Endothelial cell of umbilical vein (primary cell): ENCODE measurements at regions of chrX and their contacts with region 1.

Region 1: GRCh38 chrX:119606280-119607015 is at the start of gene NKRF:
- DNase-seq: peak; percentile 92
- H3K4me3 ChIP-seq: peak within 1 kb of the TSS; percentile 16 to 63 (median 54)
- H3K27ac ChIP-seq: peak within 1 kb of the TSS; percentile 63
- H3K4me1 ChIP-seq: peaks cover 2% of the 10 kb centered on the region
- H3K27me3 ChIP-seq: peaks cover 0 to 3% of the 10 kb centered on the region in 2 experiments
- CTCF ChIP-seq: no peak
- POLR2A ChIP-seq: peak; percentile 78
- total RNA-seq, gene NKRF: 10.8 and 12.0 TPM in 2 replicates

Region 2: GRCh38 chrX:119359618-119360382 is 246.6 kb before region 1 on chrX:
- CTCF ChIA-PET with region 1: no interaction called
- POLR2A ChIA-PET with region 1: no interaction called
- dilution Hi-C with region 1: no loop called
- intact Hi-C with region 1: no loop called
- DNase-seq: no peak
- H3K4me3 ChIP-seq: no peak overlapping the region
- H3K27ac ChIP-seq: no peak overlapping the region
- H3K4me1 ChIP-seq: no peaks in the 10 kb centered on the region
- H3K27me3 ChIP-seq: no peaks in the 10 kb centered on the region
- CTCF ChIP-seq: no peak
- POLR2A ChIP-seq: no peak

Region 3: GRCh38 chrX:119729408-119730201 is 123.2 kb after region 1 on chrX:
- CTCF ChIA-PET with region 1: interaction called, 106 read pairs
- POLR2A ChIA-PET with region 1: no interaction called
- dilution Hi-C with region 1: no loop called
- intact Hi-C with region 1: loop called (anchors 1 kb)
- DNase-seq: peak; percentile 59
- H3K4me3 ChIP-seq: no peak overlapping the region
- H3K27ac ChIP-seq: no peak overlapping the region
- H3K4me1 ChIP-seq: no peaks in the 10 kb centered on the region
- H3K27me3 ChIP-seq: no peaks in the 10 kb centered on the region
- CTCF ChIP-seq: peak; percentile 35 to 50
- POLR2A ChIP-seq: no peak

Region 4: GRCh38 chrX:119753571-119754257 is 147.3 kb after region 1 on chrX:
- CTCF ChIA-PET with region 1: interaction called, 11 read pairs
- POLR2A ChIA-PET with region 1: no interaction called
- dilution Hi-C with region 1: no loop called
- intact Hi-C with region 1: no loop called
- DNase-seq: peak; percentile 56
- H3K4me3 ChIP-seq: no peak overlapping the region
- H3K27ac ChIP-seq: no peak overlapping the region
- H3K4me1 ChIP-seq: no peaks in the 10 kb centered on the region
- H3K27me3 ChIP-seq: no peaks in the 10 kb centered on the region
- CTCF ChIP-seq: peak; percentile 21 to 40
- POLR2A ChIP-seq: no peak

Region 5: GRCh38 chrX:119871599-119872395 is 265.3 kb after region 1 on chrX and contains the starts of genes NDUFA1 and RNF113A:
- CTCF ChIA-PET with region 1: no interaction called
- POLR2A ChIA-PET with region 1: no interaction called
- dilution Hi-C with region 1: no loop called
- intact Hi-C with region 1: no loop called
- DNase-seq: peak; percentile 69
- H3K4me3 ChIP-seq: peak within 1 kb of the TSS; percentile 74 to 93 (median 84)
- H3K27ac ChIP-seq: peak within 1 kb of the TSS; percentile 87
- H3K4me1 ChIP-seq: peaks cover 11% of the 10 kb centered on the region
- H3K27me3 ChIP-seq: no peaks in the 10 kb centered on the region
- CTCF ChIP-seq: no peak
- POLR2A ChIP-seq: peak; percentile 80
- total RNA-seq, gene NDUFA1: 89.9 and 96.3 TPM in 2 replicates
- total RNA-seq, gene RNF113A: 10.2 and 11.7 TPM in 2 replicates